Activated CD4-positive, alpha-beta memory T cell treated with anti-CD3 and anti-CD28 coated beads for 36 hours (primary cell): ENCODE measurements at regions of chr1 and their contacts with region 1.

Region 1: GRCh38 chr1:160006312-160006940 is 25.4 kb downstream of the PIGM start:
- DNase-seq: peak; percentile 82
- H3K4me3 Mint-ChIP-seq: no peak overlapping the region
- H3K27ac Mint-ChIP-seq: no peak overlapping the region
- H3K4me1 Mint-ChIP-seq: no peaks in the 10 kb centered on the region
- H3K27me3 Mint-ChIP-seq: peaks cover 2% of the 10 kb centered on the region

Region 2: DNA sequence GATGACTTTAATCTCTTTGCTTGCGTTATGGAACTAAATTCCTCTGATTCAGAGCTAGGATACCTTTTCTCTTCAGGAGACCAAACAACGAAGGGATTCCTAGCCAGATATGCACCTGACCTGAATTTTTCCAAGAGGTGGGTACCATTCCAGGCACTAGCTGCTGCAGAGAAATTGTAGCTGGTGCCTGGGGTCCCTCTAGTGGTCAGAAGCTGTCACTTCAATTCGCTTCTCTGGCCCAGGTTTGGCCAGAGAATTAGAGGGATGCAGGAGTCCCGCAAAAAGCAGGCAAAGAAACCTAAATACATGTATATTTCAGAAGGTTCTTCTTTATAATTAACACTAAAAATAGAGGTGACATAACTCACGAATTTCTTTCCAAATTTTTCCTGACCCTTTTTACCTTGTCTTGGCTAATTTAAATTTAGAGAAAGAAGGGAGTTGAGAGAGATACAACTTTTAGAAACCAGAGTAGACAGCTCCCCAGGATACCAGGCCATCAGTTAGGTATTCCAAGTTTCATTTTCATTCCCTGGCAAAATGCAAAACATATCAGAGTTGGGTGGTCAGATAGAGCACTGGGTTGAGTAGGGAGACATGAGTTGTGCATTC is 792.2 kb before region 1 on chr1:
- CTCF ChIA-PET with region 1: interaction called, 4 read pairs
- POLR2A ChIA-PET with region 1: no interaction called
- intact Hi-C with region 1: loop called (anchors 10 kb)
- DNase-seq: peak; percentile 54
- H3K4me3 Mint-ChIP-seq: no peak overlapping the region
- H3K27ac Mint-ChIP-seq: no peak overlapping the region
- H3K4me1 Mint-ChIP-seq: no peaks in the 10 kb centered on the region
- H3K27me3 Mint-ChIP-seq: peaks cover 29% of the 10 kb centered on the region

Region 3: DNA sequence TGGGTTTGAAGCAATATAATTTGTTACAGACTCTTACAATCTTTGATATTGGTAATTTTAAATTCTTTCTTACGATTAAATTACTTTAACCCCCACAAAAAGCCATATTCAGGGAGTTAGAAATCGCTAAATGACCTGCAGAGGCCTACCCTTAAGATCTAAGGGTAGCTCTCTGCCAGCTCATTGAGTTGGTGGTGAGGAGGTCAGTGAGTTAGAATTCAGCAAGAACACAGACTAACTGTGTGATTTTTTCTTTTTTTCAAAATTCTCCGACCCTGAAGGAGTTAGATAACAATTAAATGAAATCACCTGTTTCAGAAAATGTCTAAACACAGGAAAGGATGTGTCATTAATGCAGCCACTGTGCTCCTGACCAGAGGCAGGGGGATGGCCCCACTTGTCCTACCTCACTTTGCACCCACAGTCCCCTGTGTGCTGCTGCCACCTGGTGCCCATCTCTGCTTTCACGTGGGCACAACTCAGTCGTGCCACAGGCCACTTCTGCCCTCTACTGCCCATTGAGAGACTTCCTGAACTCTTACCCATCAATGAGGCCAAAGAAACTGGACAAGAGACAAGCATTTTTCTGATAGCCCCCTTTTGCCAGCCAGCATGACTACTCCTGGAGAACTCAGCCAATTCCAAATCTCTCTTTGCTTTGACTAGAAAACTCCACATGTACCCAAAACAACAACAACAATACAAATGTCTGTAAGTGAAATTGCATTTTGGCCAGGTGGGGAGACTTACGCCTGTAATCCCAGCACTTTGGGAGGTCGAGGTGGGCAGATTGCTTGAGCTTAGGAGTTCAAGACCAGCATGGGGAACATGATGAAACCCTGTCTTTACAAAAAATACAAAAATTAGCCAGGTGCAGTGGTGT is 114.9 kb before region 1 on chr1:
- CTCF ChIA-PET with region 1: interaction called, 68 read pairs
- POLR2A ChIA-PET with region 1: no interaction called
- intact Hi-C with region 1: loop called (anchors 2 kb)
- DNase-seq: peak; percentile 89
- H3K4me3 Mint-ChIP-seq: no peak overlapping the region
- H3K27ac Mint-ChIP-seq: no peak overlapping the region
- H3K4me1 Mint-ChIP-seq: peaks cover 9% of the 10 kb centered on the region
- H3K27me3 Mint-ChIP-seq: no peaks in the 10 kb centered on the region

Region 4: DNA sequence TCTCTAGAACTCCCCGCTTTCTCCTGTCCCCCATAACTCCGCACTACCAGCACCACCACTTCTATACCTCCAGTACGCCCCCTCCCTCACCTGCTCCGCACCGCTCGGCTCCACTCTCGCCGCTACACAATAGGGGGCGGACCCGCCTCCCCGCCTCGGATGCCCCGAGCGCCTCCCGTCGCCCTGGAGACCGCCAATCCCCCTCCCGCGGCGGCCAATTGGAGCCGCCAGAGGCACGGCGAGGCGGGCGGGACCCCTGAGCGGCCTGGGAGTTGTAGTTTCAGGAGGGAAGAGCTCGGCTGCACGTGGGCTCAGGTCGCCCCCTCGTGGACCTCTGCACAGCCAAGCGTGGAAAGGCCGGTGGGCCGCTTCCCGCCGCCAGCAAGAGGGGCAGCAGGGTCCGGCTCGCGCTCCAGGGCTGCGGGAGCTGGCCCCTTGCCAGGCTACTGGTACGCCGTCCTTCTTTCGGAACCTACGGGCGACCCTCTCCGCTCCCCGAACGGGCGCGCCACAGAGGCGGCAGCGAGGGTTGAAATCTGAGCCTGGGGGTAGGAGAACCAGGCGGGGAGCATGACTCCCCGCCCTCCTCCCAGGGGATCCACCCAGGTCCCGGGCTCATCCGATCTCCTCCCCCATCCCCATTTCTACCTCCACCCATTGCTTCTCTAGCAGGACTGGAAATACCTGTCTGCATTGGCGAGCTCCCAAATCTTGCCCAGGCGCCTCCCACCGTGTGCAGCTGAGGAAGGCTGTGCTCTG is 60.8 kb before region 1 on chr1 and contains the start of gene IGSF9:
- CTCF ChIA-PET with region 1: interaction called, 311 read pairs
- POLR2A ChIA-PET with region 1: no interaction called
- intact Hi-C with region 1: no loop called
- DNase-seq: peak; percentile 67
- H3K4me3 Mint-ChIP-seq: peak within 1 kb of the TSS; percentile 20
- H3K27ac Mint-ChIP-seq: no peak within 1 kb of the TSS
- H3K4me1 Mint-ChIP-seq: peaks cover 3% of the 10 kb centered on the region
- H3K27me3 Mint-ChIP-seq: peaks cover 43% of the 10 kb centered on the region
- total RNA-seq, gene IGSF9: 0.05 TPM in 1 of 2 experiments, not detected in the other

Region 5: DNA sequence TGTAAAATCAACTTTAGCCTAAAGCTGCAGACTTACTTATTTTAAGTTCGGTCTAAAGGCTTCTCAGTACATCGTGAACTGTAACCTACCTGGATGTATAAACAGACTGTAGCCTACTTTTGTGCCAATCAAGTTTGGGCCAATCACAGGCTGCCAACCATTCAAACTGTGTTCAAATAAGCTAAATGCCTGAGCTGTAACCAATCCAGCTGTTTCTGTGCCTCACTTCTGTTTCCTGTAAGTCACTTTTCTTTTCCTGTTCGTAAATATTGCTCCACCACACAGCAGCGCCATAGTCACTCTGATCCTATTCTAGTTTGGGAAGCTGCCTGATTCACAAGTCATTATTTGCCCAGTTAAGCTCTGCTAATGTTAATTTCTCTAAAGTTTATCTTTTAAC is 14.9 kb before region 1 on chr1:
- CTCF ChIA-PET with region 1: interaction called, 34 read pairs
- POLR2A ChIA-PET with region 1: no interaction called
- intact Hi-C with region 1: no loop called
- DNase-seq: peak; percentile 24
- H3K4me3 Mint-ChIP-seq: no peak overlapping the region
- H3K27ac Mint-ChIP-seq: no peak overlapping the region
- H3K4me1 Mint-ChIP-seq: peaks cover 5% of the 10 kb centered on the region
- H3K27me3 Mint-ChIP-seq: peaks cover 1% of the 10 kb centered on the region

Region 6: DNA sequence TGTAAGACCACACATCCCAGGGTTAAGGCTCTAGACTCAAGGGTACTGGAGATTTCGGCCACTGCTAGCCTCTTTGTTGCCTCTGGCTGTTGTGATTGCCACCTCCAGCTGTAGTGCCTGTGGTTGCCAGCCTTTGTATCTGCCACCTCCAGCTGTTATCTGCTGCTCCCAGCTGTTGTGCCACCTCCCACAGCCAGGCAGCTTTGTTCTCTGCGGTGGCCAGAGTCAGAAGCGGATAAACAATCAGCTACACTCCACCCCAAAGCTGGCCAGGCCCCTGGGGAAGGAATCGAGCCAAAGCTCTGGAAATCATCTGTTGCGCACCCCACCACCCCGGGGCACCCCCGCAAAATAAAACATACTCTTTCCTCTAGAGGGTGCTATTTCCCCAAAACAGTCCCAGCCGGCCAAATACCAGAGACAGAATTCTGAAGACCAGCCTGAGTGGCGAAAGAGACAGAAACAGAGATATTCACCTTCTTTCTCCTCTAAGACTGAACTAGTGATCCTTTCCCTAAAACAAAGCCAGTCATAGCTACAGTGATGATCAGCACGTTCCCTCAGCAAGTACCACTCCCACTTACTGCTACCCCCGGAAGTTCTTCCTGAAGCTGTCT is 40.2 kb after region 1 on chr1:
- CTCF ChIA-PET with region 1: interaction called, 31 read pairs
- POLR2A ChIA-PET with region 1: no interaction called
- intact Hi-C with region 1: no loop called
- DNase-seq: peak; percentile 61
- H3K4me3 Mint-ChIP-seq: peak overlapping the region; percentile 50
- H3K27ac Mint-ChIP-seq: no peak overlapping the region
- H3K4me1 Mint-ChIP-seq: peaks cover 9% of the 10 kb centered on the region
- H3K27me3 Mint-ChIP-seq: peaks cover 15% of the 10 kb centered on the region

Region 7: DNA sequence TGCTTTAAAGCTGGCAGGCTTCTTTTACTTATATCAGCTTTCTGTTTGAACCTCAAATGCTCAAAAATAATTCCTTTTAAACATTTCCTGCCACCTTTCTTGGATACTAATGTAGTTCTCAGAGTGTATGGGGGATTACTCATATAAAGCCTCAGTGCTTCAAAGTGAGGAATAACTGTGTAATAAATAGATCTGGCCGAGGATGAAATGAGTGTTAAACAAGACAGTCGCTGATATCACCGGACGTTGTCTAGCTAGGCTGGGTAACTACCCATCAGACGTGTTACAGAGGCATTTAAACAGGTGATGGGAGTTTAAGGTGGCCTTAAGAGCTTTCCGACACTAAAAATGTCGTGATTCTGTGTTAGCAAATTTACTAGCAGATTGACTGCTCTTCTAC is 447.0 kb after region 1 on chr1:
- CTCF ChIA-PET with region 1: no interaction called
- POLR2A ChIA-PET with region 1: no interaction called
- intact Hi-C with region 1: no loop called
- DNase-seq: peak; percentile 65
- H3K4me3 Mint-ChIP-seq: peak overlapping the region; percentile 55
- H3K27ac Mint-ChIP-seq: peak overlapping the region; percentile 97
- H3K4me1 Mint-ChIP-seq: peaks cover 79% of the 10 kb centered on the region
- H3K27me3 Mint-ChIP-seq: no peaks in the 10 kb centered on the region